Sigmoid colon (tissue), 7 donors: ENCODE measurements at regions of chr3 and their contacts with region 1.

Region 1: DNA sequence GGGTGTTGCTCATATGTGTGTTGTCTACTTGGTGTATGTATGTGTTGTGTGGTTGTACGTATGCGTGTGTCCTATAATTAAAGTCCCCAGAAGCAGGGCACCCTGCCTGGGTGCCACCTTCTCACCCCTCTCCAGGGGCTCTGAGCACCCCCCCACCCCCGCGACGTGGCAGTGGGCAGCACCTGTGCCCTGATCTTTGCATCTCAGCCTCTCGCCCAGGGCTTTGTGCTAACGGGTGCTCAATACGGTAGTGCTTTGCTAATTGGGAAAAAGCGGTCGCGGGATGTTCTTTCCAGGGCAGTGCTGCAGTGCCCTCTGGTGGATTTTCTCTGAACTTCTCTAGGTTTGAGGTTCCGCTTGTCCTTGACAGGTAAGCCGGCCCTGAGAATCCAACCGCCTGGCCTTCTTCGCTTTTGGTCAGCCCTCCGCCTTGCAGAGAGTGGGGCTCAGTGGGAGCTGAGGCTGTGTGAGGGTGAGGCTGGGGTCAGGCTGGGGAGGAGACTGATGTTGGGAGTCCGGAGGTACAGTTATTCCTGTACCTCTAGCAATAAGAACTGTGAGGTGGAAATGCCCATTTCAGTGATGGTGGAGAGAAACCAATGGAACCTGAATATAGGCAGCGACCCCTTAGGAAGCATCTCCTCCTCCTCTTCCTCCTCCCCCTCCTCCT is 17.6 kb upstream of the EPHB3 start:
- DNase-seq: peak; percentile 78
- H3K4me3 ChIP-seq: no peak overlapping the region
- H3K27ac ChIP-seq: no peak overlapping the region
- H3K4me1 ChIP-seq: peaks cover 0 to 7% (median 3%) of the 10 kb centered on the region in 4 donors
- H3K27me3 ChIP-seq: peaks cover 0 to 39% (median 17%) of the 10 kb centered on the region in 3 donors
- CTCF ChIP-seq: peak; percentile 74 to 93 (median 87)
- EP300 ChIP-seq: no peak
- POLR2A ChIP-seq: no peak

Region 2: GRCh38 chr3:184417619-184418327 is 126.2 kb before region 1 on chr3:
- intact Hi-C with region 1: loop called (anchors 5 kb)
- DNase-seq: peak; percentile 81
- H3K4me3 ChIP-seq: no peak overlapping the region
- H3K27ac ChIP-seq: no peak overlapping the region
- H3K4me1 ChIP-seq: no peaks in the 10 kb centered on the region
- H3K27me3 ChIP-seq: no peaks in the 10 kb centered on the region
- CTCF ChIP-seq: peak; percentile 45 to 69 (median 64)
- EP300 ChIP-seq: no peak
- POLR2A ChIP-seq: no peak